Panc1 (cell line): ENCODE measurements at regions of chr1 and their contacts with region 1.

Region 1: GRCh38 chr1:86687595-86687994 is 16.8 kb upstream of the SH3GLB1 start:
- DNase-seq: no peak
- ATAC-seq: no peak
- H3K4me3 ChIP-seq: no peak overlapping the region
- H3K27ac ChIP-seq: no peak overlapping the region
- H3K4me1 ChIP-seq: no peaks in the 10 kb centered on the region
- H3K27me3 ChIP-seq: peaks cover 13% of the 10 kb centered on the region
- CTCF ChIP-seq: no peak; the same call in 1 of the 2 replicates

Region 2: GRCh38 chr1:86470859-86471258 is 216.7 kb before region 1 on chr1:
- CTCF ChIA-PET with region 1: interaction called, 3 read pairs
- POLR2A ChIA-PET with region 1: no interaction called
- in situ Hi-C with region 1: no loop called
- intact Hi-C with region 1: loop called (anchors 10 kb)
- DNase-seq: no peak
- ATAC-seq: no peak
- H3K4me3 ChIP-seq: no peak overlapping the region
- H3K27ac ChIP-seq: no peak overlapping the region
- H3K4me1 ChIP-seq: no peaks in the 10 kb centered on the region
- H3K27me3 ChIP-seq: peaks cover 29% of the 10 kb centered on the region
- CTCF ChIP-seq: no peak